ENCODE measurements at regions of chr4 and their contacts with region 1.

Region 1: DNA sequence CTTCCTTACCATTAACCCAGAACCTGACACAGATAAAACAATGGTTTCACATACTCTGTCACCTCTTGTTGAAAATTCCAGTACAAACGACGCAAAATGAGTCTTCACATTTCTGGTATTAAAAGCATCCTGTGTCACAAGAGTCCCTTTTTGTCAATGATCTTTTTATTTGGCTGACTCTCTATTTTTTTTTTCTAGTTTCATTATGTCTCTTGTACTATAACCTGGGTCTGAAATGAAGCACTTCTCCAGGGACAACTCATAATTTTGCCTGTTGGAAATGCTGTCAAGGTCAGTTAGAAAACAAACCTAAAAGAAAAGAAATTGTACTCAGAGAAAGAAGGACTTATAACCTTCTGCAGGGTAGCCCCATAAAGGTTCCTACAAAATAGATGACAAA is 93.1 kb downstream of the NR3C2 start:
- DNase-seq: no peak
- H3K4me3 Mint-ChIP-seq: no peak overlapping the region
- H3K27ac Mint-ChIP-seq: peak overlapping the region; percentile 60
- H3K4me1 Mint-ChIP-seq: peaks cover 45% of the 10 kb centered on the region
- H3K27me3 Mint-ChIP-seq: no peaks in the 10 kb centered on the region

Region 2: GRCh38 chr4:147994076-147994475 is 355.1 kb before region 1 on chr4:
- CTCF ChIA-PET with region 1: no interaction called
- intact Hi-C with region 1: no loop called
- DNase-seq: no peak
- H3K4me3 Mint-ChIP-seq: no peak overlapping the region
- H3K27ac Mint-ChIP-seq: no peak overlapping the region
- H3K4me1 Mint-ChIP-seq: no peaks in the 10 kb centered on the region
- H3K27me3 Mint-ChIP-seq: no peaks in the 10 kb centered on the region

Region 3: GRCh38 chr4:148311526-148311925 is 37.6 kb before region 1 on chr4:
- CTCF ChIA-PET with region 1: no interaction called
- intact Hi-C with region 1: loop called (anchors 2 kb)
- DNase-seq: no peak
- H3K4me3 Mint-ChIP-seq: no peak overlapping the region
- H3K27ac Mint-ChIP-seq: no peak overlapping the region
- H3K4me1 Mint-ChIP-seq: peaks cover 21% of the 10 kb centered on the region
- H3K27me3 Mint-ChIP-seq: no peaks in the 10 kb centered on the region

Region 4: GRCh38 chr4:148366251-148366650 is 17.1 kb after region 1 on chr4:
- CTCF ChIA-PET with region 1: no interaction called
- intact Hi-C with region 1: loop called (anchors 1 kb)
- DNase-seq: no peak
- H3K4me3 Mint-ChIP-seq: no peak overlapping the region
- H3K27ac Mint-ChIP-seq: no peak overlapping the region
- H3K4me1 Mint-ChIP-seq: peaks cover 33% of the 10 kb centered on the region
- H3K27me3 Mint-ChIP-seq: no peaks in the 10 kb centered on the region

Measured in activated naive CD4-positive, alpha-beta T cell treated with anti-CD3 and anti-CD28 coated beads for 36 hours (primary cell).